ENCODE measurements at regions of chr7 and their contacts with region 1.

Region 1: GRCh38 chr7:2567679-2568278 is 9.0 kb downstream of the IQCE start:
- DNase-seq: no peak
- H3K4me3 ChIP-seq: no peak overlapping the region
- H3K27ac ChIP-seq: no peak overlapping the region
- H3K4me1 ChIP-seq: peaks cover 6% of the 10 kb centered on the region
- H3K27me3 ChIP-seq: no peaks in the 10 kb centered on the region
- CTCF ChIP-seq: peak; percentile 2 to 39

Region 2: DNA sequence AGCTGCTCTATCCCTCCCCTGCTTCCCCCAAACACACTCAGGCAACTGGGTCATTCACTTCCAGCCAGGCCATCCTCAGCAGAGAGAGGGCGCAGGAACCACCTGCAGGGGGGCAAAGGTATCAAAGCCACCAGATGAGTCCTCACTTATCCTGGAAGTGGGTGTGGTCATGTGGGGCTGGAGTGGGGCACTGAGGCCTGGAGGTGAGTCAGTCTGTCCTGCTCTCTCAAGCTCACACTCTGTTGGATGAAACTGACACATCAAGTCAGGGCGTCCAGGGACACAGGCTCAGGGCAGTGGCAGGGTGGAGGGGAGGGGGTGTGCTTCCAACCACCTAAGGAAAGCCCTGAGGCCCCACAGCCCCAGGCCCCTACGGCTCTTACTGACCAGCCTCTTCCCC is 905.7 kb before region 1 on chr7:
- CTCF ChIA-PET with region 1: no interaction called
- dilution Hi-C with region 1: no loop called
- in situ Hi-C with region 1: no loop called
- intact Hi-C with region 1: no loop called
- DNase-seq: no peak
- H3K4me3 ChIP-seq: no peak overlapping the region
- H3K27ac ChIP-seq: no peak overlapping the region
- H3K4me1 ChIP-seq: peaks cover 6% of the 10 kb centered on the region
- H3K27me3 ChIP-seq: peaks cover 19% of the 10 kb centered on the region
- CTCF ChIP-seq: no peak

Region 3: DNA sequence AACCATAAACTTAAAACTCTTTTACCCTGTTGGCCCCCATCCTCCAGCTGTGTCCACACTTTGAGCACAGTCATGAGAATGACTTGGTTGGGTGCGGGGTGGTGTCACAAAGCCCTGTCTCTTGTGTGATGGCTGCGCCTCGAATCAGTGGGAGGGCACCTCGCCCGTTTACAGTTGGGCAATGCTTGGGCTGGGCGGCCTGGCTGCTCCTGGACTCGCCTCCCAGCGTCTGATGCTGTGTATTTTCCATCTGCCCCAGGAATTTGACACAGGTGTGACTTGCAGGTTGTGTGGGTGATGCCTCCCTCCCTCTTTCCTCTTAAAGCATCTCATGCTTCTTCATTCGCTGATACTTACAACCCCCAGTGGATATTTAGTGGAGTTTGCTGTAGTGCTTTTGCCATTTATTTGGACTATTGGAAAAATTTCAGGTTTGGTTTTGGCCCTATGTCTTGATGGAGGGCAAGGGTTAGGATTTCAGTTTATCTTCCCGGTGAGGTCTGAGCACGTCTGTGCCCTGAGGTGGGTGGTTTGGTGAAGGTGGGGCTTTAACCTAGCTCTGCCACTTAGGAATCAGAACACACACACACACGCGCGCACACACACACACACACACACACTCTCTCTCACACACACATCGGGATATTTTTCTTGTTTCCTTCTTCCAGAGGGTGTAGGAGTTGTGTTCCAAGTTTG is 130.5 kb before region 1 on chr7:
- CTCF ChIA-PET with region 1: no interaction called
- dilution Hi-C with region 1: loop called (anchors 5 kb)
- in situ Hi-C with region 1: no loop called
- intact Hi-C with region 1: no loop called
- DNase-seq: no peak
- H3K4me3 ChIP-seq: no peak overlapping the region
- H3K27ac ChIP-seq: no peak overlapping the region
- H3K4me1 ChIP-seq: no peaks in the 10 kb centered on the region
- H3K27me3 ChIP-seq: no peaks in the 10 kb centered on the region
- CTCF ChIP-seq: no peak

Region 4: DNA sequence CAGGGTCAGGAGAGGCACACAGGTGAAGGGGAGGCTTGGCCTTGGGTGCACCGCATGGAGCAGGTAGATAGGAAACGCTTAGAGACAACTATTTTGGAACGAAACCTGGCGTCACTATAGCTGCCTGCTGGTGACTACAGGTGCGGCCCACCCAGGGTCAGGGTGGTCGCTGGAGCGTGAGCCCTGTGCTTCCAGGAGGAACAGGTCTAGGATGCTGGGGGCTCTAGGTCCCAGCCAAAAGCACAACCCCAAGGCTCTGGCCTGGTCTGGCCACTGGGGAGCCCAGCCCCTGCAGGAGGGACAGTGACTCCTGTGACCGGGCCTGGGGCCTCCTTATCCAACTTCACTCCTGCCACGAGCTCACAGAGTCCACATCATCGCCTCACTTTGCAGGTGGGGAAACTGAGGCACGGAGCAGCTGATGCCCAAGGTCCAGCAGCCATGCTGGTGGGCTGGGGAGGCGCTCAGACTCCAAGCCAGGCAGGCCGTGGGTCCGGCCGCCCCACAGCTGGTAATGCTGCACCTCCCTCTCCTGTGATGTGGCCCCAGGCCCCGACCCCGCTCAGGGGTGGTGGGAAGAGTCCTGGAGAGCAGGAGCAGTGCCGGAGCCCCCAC is 39.2 kb before region 1 on chr7:
- CTCF ChIA-PET with region 1: no interaction called
- dilution Hi-C with region 1: no loop called
- in situ Hi-C with region 1: no loop called
- intact Hi-C with region 1: no loop called
- DNase-seq: no peak
- H3K4me3 ChIP-seq: no peak overlapping the region
- H3K27ac ChIP-seq: no peak overlapping the region
- H3K4me1 ChIP-seq: peaks cover 73% of the 10 kb centered on the region
- H3K27me3 ChIP-seq: no peaks in the 10 kb centered on the region
- CTCF ChIP-seq: no peak

Region 5: GRCh38 chr7:2539031-2539911 is 28.5 kb before region 1 on chr7:
- CTCF ChIA-PET with region 1: interaction called, 20 read pairs
- dilution Hi-C with region 1: no loop called
- in situ Hi-C with region 1: no loop called
- intact Hi-C with region 1: no loop called
- DNase-seq: no peak
- H3K4me3 ChIP-seq: no peak overlapping the region
- H3K27ac ChIP-seq: no peak overlapping the region
- H3K4me1 ChIP-seq: no peaks in the 10 kb centered on the region
- H3K27me3 ChIP-seq: no peaks in the 10 kb centered on the region
- CTCF ChIP-seq: no peak

Region 6: GRCh38 chr7:2621061-2621828 is 53.5 kb after region 1 on chr7:
- CTCF ChIA-PET with region 1: no interaction called
- dilution Hi-C with region 1: loop called (anchors 5 kb)
- in situ Hi-C with region 1: no loop called
- intact Hi-C with region 1: no loop called
- DNase-seq: no peak
- H3K4me3 ChIP-seq: no peak overlapping the region
- H3K27ac ChIP-seq: no peak overlapping the region
- H3K4me1 ChIP-seq: peaks cover 3% of the 10 kb centered on the region
- H3K27me3 ChIP-seq: no peaks in the 10 kb centered on the region
- CTCF ChIP-seq: no peak

Region 7: DNA sequence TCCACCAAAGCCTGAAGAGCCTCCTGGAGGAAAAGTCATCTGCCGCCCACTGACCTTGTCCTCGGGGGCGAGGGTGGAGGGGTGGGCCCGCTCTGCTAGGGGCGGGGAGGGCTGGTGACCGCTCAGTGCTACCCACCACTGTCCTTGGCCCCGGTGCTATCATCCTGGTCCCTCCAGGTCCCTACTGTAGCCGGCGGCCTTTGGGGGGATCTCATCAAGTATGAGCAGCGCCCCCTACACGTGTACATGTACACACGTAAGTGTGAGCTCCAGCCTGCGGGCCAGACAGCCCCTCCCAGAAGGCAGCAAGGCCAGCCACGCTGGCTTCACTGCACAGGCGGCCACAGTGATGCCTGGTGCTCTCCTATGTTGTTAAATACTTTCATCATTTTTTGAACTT is 83.6 kb after region 1 on chr7:
- CTCF ChIA-PET with region 1: no interaction called
- dilution Hi-C with region 1: loop called (anchors 5 kb)
- in situ Hi-C with region 1: no loop called
- intact Hi-C with region 1: no loop called
- DNase-seq: no peak
- H3K4me3 ChIP-seq: no peak overlapping the region
- H3K27ac ChIP-seq: no peak overlapping the region
- H3K4me1 ChIP-seq: no peaks in the 10 kb centered on the region
- H3K27me3 ChIP-seq: no peaks in the 10 kb centered on the region
- CTCF ChIP-seq: no peak

Region 8: DNA sequence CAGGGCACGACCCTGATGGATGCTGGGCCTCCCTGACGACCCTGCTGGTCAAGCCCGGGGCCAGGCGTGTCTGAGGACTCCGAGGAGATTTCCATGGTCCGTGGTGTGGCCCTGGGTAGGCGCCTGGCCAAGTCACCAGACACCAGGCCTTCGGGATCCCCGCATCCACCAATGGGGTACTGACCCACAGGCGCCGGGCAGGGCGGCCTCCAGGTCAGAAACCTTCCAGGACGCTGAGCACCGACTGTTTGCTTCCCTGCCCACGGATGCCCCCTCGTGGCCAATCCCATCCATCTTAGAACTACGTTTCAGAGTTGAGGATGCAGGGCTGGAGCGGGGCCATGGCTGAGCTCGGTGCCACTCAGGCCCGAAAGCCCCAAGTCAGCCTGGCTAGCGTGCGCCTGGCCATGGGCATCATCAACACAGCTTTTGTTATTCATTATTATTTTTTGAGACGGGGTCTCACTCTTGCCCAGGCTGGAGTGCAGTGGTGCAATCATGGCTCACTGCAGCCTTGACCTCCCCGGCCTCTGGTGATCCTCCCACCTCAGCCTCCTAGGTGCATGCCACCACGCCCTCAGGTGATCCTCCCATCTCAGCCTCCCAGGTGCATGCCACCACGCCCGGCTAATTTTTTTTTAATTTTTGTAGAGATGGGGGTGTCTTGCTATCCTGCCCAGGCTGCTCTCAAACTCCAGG is 113.2 kb after region 1 on chr7:
- CTCF ChIA-PET with region 1: no interaction called
- dilution Hi-C with region 1: no loop called
- in situ Hi-C with region 1: no loop called
- intact Hi-C with region 1: loop called (anchors 2 kb)
- DNase-seq: peak; percentile 46
- H3K4me3 ChIP-seq: no peak overlapping the region
- H3K27ac ChIP-seq: no peak overlapping the region
- H3K4me1 ChIP-seq: no peaks in the 10 kb centered on the region
- H3K27me3 ChIP-seq: peaks cover 6% of the 10 kb centered on the region
- CTCF ChIP-seq: peak; percentile 70 to 81